Posterior vena cava (tissue), 2 donors: ENCODE measurements at regions of chr4 and their contacts with region 1.

Region 1: GRCh38 chr4:63123441-63123840 is 1285.8 kb downstream of the TECRL start:
- DNase-seq: no peak

Region 2: DNA sequence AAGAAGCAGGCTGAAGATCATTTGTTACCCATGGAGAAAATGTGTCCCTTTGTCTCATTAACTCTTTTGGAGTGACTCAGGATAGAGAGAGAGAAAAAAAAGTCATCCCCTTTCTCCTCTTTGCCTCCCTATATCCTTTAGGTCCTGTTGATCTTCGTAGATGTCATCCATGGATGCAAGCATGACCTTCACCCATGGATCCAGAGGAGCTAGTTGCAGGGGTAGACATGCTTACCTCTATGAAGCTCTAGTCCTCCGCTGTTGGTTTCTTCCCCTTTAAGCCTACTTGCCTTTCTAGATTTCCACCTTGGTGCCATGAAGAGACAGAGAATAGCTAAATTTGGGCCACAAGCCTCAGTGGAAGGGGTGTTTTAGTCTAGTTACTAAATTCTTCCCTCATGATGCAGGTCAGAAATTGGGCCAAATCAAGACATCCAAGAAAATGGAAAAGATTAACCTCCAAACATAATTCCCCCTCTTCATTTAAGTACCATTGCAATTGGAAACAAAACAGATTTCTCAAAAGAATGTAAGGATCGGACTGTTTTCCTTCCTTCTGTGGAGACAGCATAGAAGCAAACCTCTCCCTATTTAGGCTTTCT is 1107.4 kb after region 1 on chr4:
- intact Hi-C with region 1: loop called in 1 of 2 experiments (anchors 5 kb)
- DNase-seq: no peak